ENCODE measurements at regions of chr16 and their contacts with region 1.

Region 1: GRCh38 chr16:6682142-6682811 is 650.4 kb upstream of the RBFOX1 start:
- DNase-seq: peak; percentile 31
- H3K4me3 Mint-ChIP-seq: no peak overlapping the region
- H3K27ac Mint-ChIP-seq: no peak overlapping the region
- H3K4me1 Mint-ChIP-seq: no peaks in the 10 kb centered on the region
- H3K27me3 Mint-ChIP-seq: no peaks in the 10 kb centered on the region
- CTCF ChIP-seq: peak; percentile 43

Region 2: DNA sequence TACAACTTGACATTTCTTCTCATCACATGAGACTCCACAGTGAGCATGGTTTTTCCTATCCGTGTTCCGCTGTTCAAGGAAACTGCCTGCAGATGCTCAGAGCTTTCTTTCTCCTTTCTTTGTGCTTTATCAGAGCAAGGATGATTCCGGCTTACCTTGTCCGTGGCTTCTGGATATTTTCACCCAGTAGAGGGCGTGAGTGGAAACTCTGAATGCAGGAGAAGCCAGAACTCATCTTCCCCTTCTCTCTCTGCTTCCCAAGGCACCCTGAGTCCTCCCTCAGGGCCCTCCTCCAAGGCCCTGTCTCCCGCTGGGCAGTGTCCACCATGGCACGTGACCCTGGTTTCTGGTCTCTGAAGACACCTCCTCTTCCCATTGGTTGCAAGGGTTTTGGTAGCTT is 70.7 kb before region 1 on chr16:
- CTCF ChIA-PET with region 1: no interaction called
- intact Hi-C with region 1: no loop called
- DNase-seq: no peak
- H3K4me3 Mint-ChIP-seq: no peak overlapping the region
- H3K27ac Mint-ChIP-seq: no peak overlapping the region
- H3K4me1 Mint-ChIP-seq: no peaks in the 10 kb centered on the region
- H3K27me3 Mint-ChIP-seq: no peaks in the 10 kb centered on the region
- CTCF ChIP-seq: no peak

Region 3: DNA sequence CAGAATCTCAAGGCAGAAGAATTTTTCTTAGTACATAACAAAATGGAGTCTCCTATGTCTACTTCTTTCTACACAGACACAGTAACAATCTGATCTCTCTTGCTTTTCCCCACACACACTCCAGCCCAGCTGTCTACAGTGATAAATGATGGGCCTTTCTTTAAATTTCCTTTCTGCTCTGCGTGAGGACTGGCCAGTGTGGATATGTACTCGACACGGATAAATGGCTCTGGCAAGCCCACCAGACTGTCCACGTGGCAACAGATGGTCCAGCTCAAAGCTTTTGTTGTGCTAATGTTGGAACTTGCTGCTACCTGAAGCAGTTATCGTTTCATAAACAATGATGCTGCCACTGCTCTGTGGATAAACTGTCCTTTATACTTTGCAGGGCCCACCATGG is 1497.3 kb after region 1 on chr16:
- CTCF ChIA-PET with region 1: no interaction called
- intact Hi-C with region 1: loop called (anchors 5 kb)
- DNase-seq: no peak
- H3K4me3 Mint-ChIP-seq: no peak overlapping the region
- H3K27ac Mint-ChIP-seq: no peak overlapping the region
- H3K4me1 Mint-ChIP-seq: no peaks in the 10 kb centered on the region
- H3K27me3 Mint-ChIP-seq: no peaks in the 10 kb centered on the region
- CTCF ChIP-seq: no peak

Measured in Calu3 (cell line).